Left cardiac atrium (tissue), 4 donors: ENCODE measurements at regions of chr22 and their contacts with region 1.

Region 1: GRCh38 chr22:27804470-27805297 is 3.1 kb upstream of the MN1 start:
- DNase-seq: peak; percentile 78
- ATAC-seq: peak; percentile 38 to 43

Region 2: GRCh38 chr22:26681395-26681821 is 1123.3 kb before region 1 on chr22:
- intact Hi-C with region 1: loop called in 1 of 2 experiments (anchors 10 kb)
- DNase-seq: no peak
- ATAC-seq: peak in 1 of 2 donors; percentile 37

Region 3: GRCh38 chr22:26756675-26757293 is 1047.9 kb before region 1 on chr22:
- intact Hi-C with region 1: loop called (anchors 5 to 10 kb)
- DNase-seq: peak; percentile 63
- ATAC-seq: peak; percentile 84 to 96

Region 4: DNA sequence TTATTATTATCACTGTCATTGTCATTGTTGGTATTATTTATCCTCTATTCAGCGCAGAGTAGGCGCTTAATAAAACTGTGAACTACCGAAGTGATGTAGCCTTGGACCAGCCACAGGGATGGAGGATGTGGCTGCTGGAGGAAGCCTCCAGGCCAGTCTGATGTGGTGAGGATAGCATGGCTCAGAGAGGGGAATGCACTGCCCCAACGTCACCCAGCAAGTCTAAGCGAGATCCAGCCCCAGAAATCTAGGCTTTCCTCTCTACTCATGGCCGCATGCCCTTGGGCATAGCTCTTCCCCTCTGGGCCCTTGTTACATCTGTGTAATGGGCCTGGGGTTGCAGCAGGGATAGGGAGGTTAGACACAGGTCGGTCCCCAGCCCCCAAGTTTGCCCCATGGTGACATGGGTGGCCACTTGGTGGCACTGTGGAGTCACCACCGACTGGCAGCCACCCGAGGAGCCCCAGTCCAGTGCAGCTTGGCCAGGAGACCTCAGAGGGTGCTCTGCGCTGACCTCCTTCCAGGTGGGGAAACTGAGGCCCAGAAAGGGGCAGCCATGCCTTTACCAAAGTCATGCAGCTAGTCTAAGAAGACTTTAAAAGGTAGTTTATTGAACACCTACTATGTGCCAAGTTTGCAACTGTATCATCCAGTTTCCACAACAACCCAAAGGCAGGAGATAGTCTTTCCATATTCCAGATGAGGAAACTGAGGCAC is 398.9 kb before region 1 on chr22:
- intact Hi-C with region 1: loop called (anchors 2 to 5 kb)
- DNase-seq: peak; percentile 80
- ATAC-seq: peak; percentile 85 to 86

Region 5: DNA sequence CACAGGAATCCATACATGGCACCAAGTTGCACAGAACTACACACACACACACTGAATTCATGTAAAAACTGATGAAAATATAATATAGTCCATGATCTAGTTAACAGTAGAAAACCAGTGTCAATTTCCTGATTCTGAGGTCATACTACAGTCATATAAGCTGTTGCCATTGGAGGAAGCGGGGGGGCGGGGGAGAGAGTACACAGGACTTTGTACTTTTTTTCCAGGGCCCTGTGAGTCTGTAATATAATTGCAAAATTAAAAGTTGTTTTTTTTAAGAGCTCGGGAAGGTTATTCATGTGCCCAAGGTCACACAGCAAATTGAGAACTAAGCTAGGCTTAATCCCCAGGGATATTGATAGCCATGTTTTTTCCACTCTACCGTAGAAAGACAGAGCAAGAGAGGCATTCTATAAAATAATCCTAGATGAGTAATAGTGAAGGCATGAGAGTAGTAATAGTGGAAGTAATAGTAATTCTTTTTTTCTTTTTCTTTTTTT is 315.5 kb before region 1 on chr22:
- intact Hi-C with region 1: loop called in 1 of 2 experiments (anchors 5 kb)
- DNase-seq: no peak
- ATAC-seq: no peak

Region 6: GRCh38 chr22:27637604-27638003 is 167.1 kb before region 1 on chr22:
- intact Hi-C with region 1: loop called in 1 of 2 experiments (anchors 5 kb)
- DNase-seq: no peak
- ATAC-seq: peak in 1 of 2 donors; percentile 1

Region 7: DNA sequence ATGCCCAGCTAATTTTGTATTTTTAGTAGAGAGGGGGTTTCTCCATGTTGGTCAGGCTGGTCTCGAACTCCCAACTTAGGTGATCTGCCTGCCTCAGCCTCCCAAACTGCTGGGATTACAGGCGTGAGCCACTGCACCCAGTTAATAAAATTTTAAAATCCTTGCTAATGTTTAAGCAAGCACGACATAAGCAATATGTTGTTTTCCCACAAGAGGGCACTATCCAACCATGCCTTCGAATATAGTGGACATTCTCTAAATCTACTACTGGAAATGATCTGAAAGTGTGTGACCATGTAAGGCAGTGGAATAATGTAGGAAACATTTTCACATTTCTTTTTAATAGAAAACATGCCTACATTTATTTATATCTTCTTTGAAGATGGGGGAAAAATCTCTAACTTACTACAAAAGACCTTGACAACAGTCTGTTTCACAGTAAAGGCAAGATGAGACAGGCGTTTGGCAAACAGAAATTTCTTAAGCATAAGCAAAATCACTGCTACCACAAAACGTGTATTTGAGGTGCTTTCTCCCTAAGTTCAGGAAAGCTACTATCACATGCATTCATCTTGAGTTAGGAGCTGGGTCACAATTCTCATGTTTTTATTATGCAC is 76.2 kb after region 1 on chr22:
- intact Hi-C with region 1: no loop called
- DNase-seq: no peak
- ATAC-seq: peak; percentile 83 to 85